ENCODE measurements at regions of chr22 and their contacts with region 1.

Region 1: DNA sequence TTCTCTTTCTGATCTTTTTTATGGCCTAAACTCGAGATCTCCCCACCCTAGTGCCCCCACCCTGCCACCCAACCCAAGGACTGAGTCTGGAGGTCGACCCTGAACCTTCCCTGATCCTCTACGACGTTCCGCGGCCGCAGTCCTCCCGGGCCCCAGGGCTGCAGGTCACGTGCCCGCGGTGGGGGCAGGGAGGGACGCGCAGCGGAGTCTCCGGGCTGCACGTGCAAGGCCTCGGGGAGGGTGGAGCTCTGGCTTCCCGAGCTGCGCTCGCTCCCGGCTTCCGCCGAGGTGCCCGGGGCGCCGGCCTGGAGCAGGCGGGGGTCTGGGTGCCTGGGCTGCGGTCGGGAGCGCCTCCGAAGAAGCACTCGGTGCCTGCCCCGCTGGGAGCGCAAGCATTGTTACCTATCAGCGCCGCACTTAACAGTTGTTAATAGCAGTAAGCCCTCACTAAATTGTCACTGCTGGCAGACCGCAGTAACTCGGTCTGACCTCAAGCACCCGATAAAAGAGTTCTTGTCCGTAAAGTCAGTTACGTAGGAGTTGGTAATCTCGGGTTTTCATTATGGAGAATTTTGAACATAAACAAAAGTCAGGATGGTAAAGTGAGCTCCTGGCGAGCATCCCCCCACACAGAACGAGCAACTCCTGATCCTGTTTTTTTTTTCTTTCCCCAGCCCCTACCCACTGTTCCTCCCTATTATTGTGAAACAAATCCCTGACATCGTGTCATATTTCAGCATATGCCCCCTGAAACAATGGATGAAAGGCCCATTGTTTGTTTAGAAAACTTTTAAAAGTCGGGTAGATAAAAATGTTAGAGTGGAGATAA is 69.7 kb upstream of the EP300 start:
- DNase-seq: peak; percentile 68 to 92
- H3K4me3 ChIP-seq: peak overlapping the region; percentile 69
- H3K27ac ChIP-seq: peak overlapping the region; percentile 95
- H3K4me1 ChIP-seq: peaks cover 15% of the 10 kb centered on the region
- H3K27me3 ChIP-seq: no peaks in the 10 kb centered on the region
- CTCF ChIP-seq: no peak

Region 2: GRCh38 chr22:40939202-40939601 is 83.5 kb before region 1 on chr22:
- CTCF ChIA-PET with region 1: no interaction called
- POLR2A ChIA-PET with region 1: interaction called, 10 read pairs
- intact Hi-C with region 1: no loop called
- DNase-seq: no peak
- H3K4me3 ChIP-seq: no peak overlapping the region
- H3K27ac ChIP-seq: no peak overlapping the region
- H3K4me1 ChIP-seq: no peaks in the 10 kb centered on the region
- H3K27me3 ChIP-seq: no peaks in the 10 kb centered on the region
- CTCF ChIP-seq: no peak

Region 3: GRCh38 chr22:40976866-40977700 is 45.6 kb before region 1 on chr22:
- CTCF ChIA-PET with region 1: no interaction called
- POLR2A ChIA-PET with region 1: interaction called, 16 read pairs
- intact Hi-C with region 1: no loop called
- DNase-seq: no peak
- H3K4me3 ChIP-seq: no peak overlapping the region
- H3K27ac ChIP-seq: no peak overlapping the region
- H3K4me1 ChIP-seq: no peaks in the 10 kb centered on the region
- H3K27me3 ChIP-seq: no peaks in the 10 kb centered on the region
- CTCF ChIP-seq: no peak

Region 4: GRCh38 chr22:41001722-41002122 is 21.0 kb before region 1 on chr22:
- CTCF ChIA-PET with region 1: interaction called, 4 read pairs
- POLR2A ChIA-PET with region 1: interaction called, 21 read pairs
- intact Hi-C with region 1: loop called (anchors 1 kb)
- DNase-seq: peak; percentile 65 to 100
- H3K4me3 ChIP-seq: peak overlapping the region; percentile 45; the same call in 1 of the 2 replicates
- H3K27ac ChIP-seq: peak overlapping the region; percentile 96
- H3K4me1 ChIP-seq: peaks cover 44% of the 10 kb centered on the region
- H3K27me3 ChIP-seq: no peaks in the 10 kb centered on the region
- CTCF ChIP-seq: no peak

Region 5: DNA sequence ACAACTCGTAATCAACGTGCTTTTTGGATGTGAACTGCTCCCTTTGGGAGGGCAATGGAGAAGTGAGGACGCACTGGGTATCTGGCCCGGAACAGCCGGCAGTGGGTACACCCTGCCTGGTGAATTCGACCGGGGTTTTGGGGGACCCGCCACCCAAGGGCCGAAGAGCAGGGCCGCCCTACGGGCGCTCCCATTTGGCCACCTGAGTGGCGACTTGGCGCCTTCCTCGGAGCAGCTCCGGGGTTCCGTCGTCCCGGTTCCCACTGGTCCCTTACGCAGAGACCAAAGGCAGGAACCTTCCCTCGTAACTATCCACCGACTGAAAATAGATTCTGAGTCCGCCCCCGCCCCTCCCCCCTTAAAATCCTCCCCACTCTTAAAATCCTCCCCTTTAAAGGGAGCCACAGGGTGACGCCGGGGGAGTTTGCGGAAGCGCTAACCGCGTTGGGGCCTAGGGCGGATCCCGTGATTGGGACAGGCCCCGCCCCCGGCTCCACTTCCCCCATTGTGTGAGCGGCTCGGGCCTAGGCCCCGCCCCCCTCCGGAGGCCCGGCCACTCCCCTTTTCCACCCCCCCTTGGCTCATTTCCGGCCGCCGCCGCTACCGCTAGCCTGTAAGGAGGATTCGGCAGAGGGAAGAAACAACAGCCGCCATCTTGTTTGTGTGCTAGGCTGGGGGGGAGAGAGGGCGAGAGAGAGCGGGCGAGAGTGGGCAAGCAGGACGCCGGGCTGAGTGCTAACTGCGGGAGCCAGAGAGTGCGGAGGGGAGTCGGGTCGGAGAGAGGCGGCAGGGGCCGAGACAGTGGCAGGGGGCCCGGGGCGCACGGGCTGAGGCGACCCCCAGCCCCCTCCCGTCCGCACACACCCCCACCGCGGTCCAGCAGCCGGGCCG is 68.7 kb after region 1 on chr22:
- CTCF ChIA-PET with region 1: no interaction called
- POLR2A ChIA-PET with region 1: interaction called, 7 read pairs
- intact Hi-C with region 1: loop called (anchors 1 kb)
- DNase-seq: peak; percentile 93 to 98
- H3K4me3 ChIP-seq: peak overlapping the region; percentile 92
- H3K27ac ChIP-seq: peak overlapping the region; percentile 97
- H3K4me1 ChIP-seq: peaks cover 28% of the 10 kb centered on the region
- H3K27me3 ChIP-seq: no peaks in the 10 kb centered on the region
- CTCF ChIP-seq: no peak

Region 6: DNA sequence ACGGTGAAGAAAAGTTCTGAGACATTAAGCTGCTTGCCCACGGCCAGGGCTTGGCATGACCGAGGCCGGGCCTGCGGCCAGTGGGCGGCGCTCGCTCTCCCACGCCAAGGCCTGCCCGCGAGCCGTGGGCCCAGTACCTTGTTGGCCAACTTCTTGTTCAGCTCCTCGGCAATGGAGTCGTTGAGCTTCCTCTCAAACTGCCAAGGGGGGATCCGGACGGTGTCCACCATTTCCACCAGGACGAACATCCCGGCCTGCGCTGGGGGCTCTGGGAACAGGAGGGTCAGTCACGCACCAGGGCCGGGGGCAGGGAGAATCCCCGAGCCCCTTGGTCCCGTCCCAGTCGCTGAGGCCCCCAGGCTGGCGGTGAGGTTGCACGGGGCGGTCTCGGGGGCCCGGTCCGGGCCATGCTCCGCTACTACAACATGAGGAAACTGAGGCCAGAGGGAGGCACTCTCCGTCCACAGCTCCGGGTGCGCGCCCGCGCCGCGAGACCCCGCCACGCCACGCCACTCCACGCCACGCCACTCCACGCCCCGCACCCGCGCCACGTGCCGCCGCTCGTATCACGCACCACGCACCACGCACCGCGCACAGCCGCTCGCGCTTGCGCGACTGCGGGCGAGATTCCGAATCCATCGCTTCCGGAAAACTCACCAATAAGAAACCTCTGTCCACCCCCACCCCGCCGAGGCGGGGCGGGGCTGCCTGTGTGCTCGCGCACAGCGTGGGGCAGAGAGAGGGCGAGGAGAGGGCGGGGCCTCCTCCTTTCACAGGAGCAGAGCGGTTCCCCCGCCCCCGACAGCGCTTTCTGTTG is 521.4 kb after region 1 on chr22 and contains the start of gene POLR3H:
- CTCF ChIA-PET with region 1: no interaction called
- POLR2A ChIA-PET with region 1: no interaction called
- intact Hi-C with region 1: no loop called
- DNase-seq: peak; percentile 95 to 99
- H3K4me3 ChIP-seq: peak within 1 kb of the TSS; percentile 83
- H3K27ac ChIP-seq: peak within 1 kb of the TSS; percentile 33; the same call in 1 of the 2 replicates
- H3K4me1 ChIP-seq: peaks cover 17% of the 10 kb centered on the region
- H3K27me3 ChIP-seq: no peaks in the 10 kb centered on the region
- CTCF ChIP-seq: peak; percentile 76
- total RNA-seq, gene POLR3H: 47.6 and 49.7 TPM in 2 replicates